Naive thymus-derived CD4-positive, alpha-beta T cell (primary cell): ENCODE measurements at regions of chr6 and their contacts with region 1.

Region 1: DNA sequence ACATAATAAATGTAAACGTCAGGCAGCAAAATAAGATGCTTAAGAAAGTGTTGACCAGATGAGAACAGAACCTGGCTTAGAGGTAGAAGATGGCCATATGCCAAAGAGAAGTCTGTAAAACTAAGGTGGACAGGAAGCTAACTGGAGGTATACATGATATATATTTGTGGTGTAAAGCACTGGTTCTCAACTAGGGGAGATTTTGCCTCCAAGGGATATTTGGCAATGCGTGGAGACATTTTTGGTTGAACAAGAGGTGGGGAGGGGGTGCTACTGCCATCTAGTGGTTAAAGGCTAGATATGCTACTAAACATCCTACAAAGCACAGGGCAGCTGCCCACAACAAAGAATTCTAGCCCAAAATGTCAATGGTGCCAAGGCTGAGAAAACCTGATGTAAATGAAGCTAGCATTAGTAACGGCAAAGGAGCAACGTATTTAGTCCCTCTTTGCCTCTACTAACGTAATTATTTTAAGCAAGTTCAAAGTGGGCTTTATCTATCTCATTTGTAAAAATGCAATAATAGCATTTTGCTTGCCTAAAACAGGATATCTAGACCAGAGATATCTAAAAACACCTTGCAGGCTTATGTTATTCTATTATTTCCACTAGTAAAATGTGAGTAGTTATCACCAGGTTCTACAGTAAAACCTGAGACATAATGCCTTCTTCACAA is 182.6 kb downstream of the RNGTT start:
- DNase-seq: peak; percentile 8 to 64 (median 53)
- ATAC-seq: peak; percentile 92
- H3K4me3 ChIP-seq: no peak overlapping the region
- H3K4me3 Mint-ChIP-seq: no peak overlapping the region
- H3K27ac ChIP-seq: no peak overlapping the region
- H3K27ac Mint-ChIP-seq: no peak overlapping the region
- H3K4me1 ChIP-seq: no peaks in the 10 kb centered on the region
- H3K4me1 Mint-ChIP-seq: peaks cover 0 to 10% (median 3%) of the 10 kb centered on the region in 7 donors
- H3K27me3 ChIP-seq: no peaks in the 10 kb centered on the region
- H3K27me3 Mint-ChIP-seq: no peaks in the 10 kb centered on the region

Region 2: DNA sequence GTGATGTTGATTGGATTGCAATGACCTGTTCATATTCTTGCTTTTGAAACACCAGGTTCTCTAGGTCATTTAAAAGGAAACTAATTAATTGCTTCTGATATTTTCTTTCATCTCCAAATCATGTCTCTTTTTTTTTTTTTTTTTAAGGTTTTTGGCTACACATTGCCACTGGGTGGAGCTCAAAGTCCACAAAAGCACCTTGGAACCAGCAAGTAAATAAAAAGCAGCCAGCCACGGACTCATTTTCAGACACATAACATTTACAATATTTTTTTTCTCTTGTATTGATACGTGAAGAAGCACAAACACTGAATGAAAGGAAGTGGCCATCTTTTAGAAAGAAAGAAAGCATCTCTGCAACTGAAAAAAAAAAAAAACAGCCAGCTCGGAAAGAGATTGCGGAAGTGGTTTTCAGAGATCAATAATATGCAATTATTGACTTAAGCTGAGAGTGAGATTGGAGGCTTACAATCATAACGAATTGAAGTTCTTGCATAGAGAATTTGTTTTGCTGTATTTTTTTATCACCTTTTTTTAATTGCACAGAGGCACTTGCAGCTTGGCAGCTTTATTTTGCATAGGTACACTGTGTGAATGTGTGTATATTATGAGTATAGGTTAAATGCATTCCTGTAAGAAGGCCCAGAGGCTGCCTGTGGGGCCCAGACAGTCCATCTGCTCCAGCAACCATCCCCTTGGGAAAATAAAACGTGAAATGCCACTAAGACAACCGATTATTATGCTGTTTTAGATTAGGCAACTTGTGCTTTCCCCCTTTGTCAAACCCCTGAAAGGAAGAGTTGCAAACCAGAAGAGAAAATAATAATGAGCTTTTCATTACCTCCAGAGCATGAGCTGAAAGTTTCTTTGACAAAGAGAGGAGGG is 1714.2 kb before region 1 on chr6:
- CTCF ChIA-PET with region 1: no interaction called
- POLR2A ChIA-PET with region 1: no interaction called
- intact Hi-C with region 1: loop called in 1 of 2 experiments (anchors 1 kb)
- DNase-seq: peak in 5 of 9 donors; percentile 7 to 39 (median 16)
- ATAC-seq: no peak
- H3K4me3 ChIP-seq: no peak overlapping the region
- H3K4me3 Mint-ChIP-seq: peak overlapping the region in 2 of 10 donors; percentile 17 to 20
- H3K27ac ChIP-seq: no peak overlapping the region
- H3K27ac Mint-ChIP-seq: no peak overlapping the region
- H3K4me1 ChIP-seq: no peaks in the 10 kb centered on the region
- H3K4me1 Mint-ChIP-seq: peaks cover 0 to 6% (median 0%) of the 10 kb centered on the region in 7 donors
- H3K27me3 ChIP-seq: peaks cover 0 to 5% of the 10 kb centered on the region in 2 donors
- H3K27me3 Mint-ChIP-seq: peaks cover 11 to 38% (median 18%) of the 10 kb centered on the region in 5 donors

Region 3: DNA sequence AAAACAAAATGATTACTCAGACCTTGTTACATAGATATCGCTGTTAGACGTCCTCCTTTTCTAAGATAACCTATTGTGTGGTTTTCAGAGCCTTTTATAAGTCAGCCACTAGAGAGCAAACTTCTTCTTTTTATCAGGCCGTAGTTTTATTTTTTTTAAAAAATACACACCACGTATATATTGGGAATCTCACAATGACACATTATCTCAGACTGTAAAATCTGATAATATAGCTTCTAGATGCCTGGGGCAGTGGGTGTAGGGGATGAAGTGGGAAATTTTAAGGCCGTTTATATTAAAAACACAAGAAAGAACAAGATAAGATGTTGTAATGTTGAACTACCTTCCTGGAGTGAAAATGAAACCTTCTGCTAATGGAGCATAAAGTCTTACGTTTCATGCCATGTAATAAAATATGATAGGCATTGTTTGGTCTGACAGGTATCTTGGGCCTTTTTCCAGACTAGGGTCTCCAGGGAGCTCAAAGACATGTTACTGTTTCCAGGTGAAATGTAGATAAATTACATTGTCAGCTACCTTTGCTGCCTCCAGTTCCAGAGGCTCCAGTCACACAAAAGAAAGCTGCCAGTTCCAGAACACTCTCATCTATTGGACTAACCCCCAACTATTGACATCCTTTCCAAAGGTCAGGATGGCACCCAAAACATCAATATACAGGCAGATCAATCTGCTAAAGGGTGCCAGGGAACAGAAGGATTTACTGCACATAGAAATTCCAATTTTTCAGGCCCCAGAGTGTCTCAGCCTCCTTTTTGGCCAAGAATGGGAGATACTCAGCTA is 948.6 kb before region 1 on chr6:
- CTCF ChIA-PET with region 1: interaction called, 3 read pairs
- POLR2A ChIA-PET with region 1: no interaction called
- intact Hi-C with region 1: loop called (anchors 1 kb)
- DNase-seq: peak in 6 of 9 donors; percentile 12 to 50 (median 29)
- ATAC-seq: peak; percentile 81
- H3K4me3 ChIP-seq: peak overlapping the region; percentile 64
- H3K4me3 Mint-ChIP-seq: peak overlapping the region; percentile 69 to 97 (median 89)
- H3K27ac ChIP-seq: peak overlapping the region; percentile 56
- H3K27ac Mint-ChIP-seq: peak overlapping the region; percentile 75 to 95 (median 88)
- H3K4me1 ChIP-seq: no peaks in the 10 kb centered on the region
- H3K4me1 Mint-ChIP-seq: peaks cover 0 to 15% (median 8%) of the 10 kb centered on the region in 7 donors
- H3K27me3 ChIP-seq: no peaks in the 10 kb centered on the region
- H3K27me3 Mint-ChIP-seq: peaks cover 0 to 12% (median 4%) of the 10 kb centered on the region in 5 donors

Region 4: DNA sequence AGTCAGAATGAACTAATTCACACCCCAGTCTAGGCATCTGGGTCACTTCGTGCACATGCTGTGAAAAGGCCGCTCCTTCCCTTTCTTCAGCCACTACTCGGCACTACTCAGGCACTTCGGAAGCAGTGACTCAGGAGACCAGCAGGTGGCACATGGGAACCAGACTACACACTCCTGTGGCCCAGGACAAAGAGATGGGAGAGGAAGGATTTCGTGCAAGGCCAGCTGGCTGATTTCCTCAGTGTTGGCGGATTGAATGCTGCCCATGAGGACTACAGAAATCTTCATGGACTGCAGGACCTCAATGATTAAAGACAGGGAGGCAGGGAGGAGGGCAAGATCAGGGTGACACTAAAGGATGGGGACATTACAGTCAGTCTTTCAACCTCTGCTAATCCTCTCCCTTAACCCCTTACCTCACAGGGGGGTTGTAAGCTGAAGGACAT is 851.0 kb before region 1 on chr6:
- CTCF ChIA-PET with region 1: interaction called, 3 read pairs
- POLR2A ChIA-PET with region 1: no interaction called
- intact Hi-C with region 1: loop called (anchors 1 to 2 kb)
- DNase-seq: peak; percentile 5 to 55 (median 43)
- ATAC-seq: peak; percentile 83
- H3K4me3 ChIP-seq: no peak overlapping the region
- H3K4me3 Mint-ChIP-seq: no peak overlapping the region
- H3K27ac ChIP-seq: no peak overlapping the region
- H3K27ac Mint-ChIP-seq: no peak overlapping the region
- H3K4me1 ChIP-seq: peaks cover 0 to 5% of the 10 kb centered on the region in 2 donors
- H3K4me1 Mint-ChIP-seq: peaks cover 0 to 3% (median 0%) of the 10 kb centered on the region in 7 donors
- H3K27me3 ChIP-seq: no peaks in the 10 kb centered on the region
- H3K27me3 Mint-ChIP-seq: peaks cover 0 to 15% (median 3%) of the 10 kb centered on the region in 5 donors

Region 5: GRCh38 chr6:88586371-88587149 is 194.3 kb before region 1 on chr6:
- CTCF ChIA-PET with region 1: no interaction called
- POLR2A ChIA-PET with region 1: no interaction called
- intact Hi-C with region 1: no loop called
- DNase-seq: no peak
- ATAC-seq: no peak
- H3K4me3 ChIP-seq: no peak overlapping the region
- H3K4me3 Mint-ChIP-seq: no peak overlapping the region
- H3K27ac ChIP-seq: no peak overlapping the region
- H3K27ac Mint-ChIP-seq: no peak overlapping the region
- H3K4me1 ChIP-seq: no peaks in the 10 kb centered on the region
- H3K4me1 Mint-ChIP-seq: no peaks in the 10 kb centered on the region
- H3K27me3 ChIP-seq: no peaks in the 10 kb centered on the region
- H3K27me3 Mint-ChIP-seq: peaks cover 0 to 32% (median 23%) of the 10 kb centered on the region in 5 donors

Region 6: DNA sequence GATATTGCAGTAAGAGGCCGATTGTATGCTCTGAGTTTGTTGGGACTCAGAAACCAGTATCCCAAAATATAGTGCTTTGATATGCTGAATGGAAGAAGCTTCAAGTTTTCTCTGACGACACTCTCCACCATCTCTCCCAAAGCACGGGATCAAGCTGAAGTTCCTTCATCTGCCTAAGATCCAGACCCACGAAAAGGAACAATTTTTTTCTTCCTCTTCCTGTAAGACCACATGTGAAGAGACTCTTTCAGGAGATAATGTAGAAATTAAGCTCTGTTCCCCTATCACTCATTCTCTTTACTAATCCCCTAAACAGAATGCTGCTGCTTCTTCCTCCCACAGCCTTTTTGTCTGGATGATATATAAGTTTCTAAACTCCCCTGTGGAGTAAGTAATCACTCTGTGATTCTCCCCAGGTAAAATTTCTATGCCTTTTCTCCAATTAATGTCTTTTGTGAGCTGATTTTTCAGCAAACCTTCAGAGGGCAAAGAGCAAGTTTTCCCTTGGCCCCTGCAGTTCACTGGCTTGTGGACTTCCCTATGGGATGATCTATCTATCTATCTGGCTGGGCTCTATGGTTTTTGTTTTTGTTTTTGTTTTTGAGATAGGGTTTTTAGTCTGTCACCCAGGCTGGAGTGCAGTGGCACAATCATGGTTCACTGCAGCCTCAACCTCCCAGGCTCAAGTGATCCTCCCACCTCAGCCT is 286.2 kb after region 1 on chr6:
- CTCF ChIA-PET with region 1: no interaction called
- POLR2A ChIA-PET with region 1: no interaction called
- intact Hi-C with region 1: no loop called
- DNase-seq: no peak
- ATAC-seq: peak; percentile 27
- H3K4me3 ChIP-seq: no peak overlapping the region
- H3K4me3 Mint-ChIP-seq: no peak overlapping the region
- H3K27ac ChIP-seq: no peak overlapping the region
- H3K27ac Mint-ChIP-seq: no peak overlapping the region
- H3K4me1 ChIP-seq: no peaks in the 10 kb centered on the region
- H3K4me1 Mint-ChIP-seq: peaks cover 0 to 13% (median 0%) of the 10 kb centered on the region in 7 donors
- H3K27me3 ChIP-seq: no peaks in the 10 kb centered on the region
- H3K27me3 Mint-ChIP-seq: peaks cover 0 to 22% (median 4%) of the 10 kb centered on the region in 5 donors